Activated CD8-positive, alpha-beta T cell treated with anti-CD3 and anti-CD28 coated beads, Interleukin-2, amount 10 ng/mL, durations not matched to agents 7 days and 5 days (primary cell): ENCODE measurements at regions of chr20 and their contacts with region 1.

Region 1: GRCh38 chr20:36645998-36646397 is at the start of gene SLA2:
- DNase-seq: peak; percentile 86
- ATAC-seq: peak; percentile 80
- H3K4me3 Mint-ChIP-seq: peak within 1 kb of the TSS; percentile 99
- H3K27ac Mint-ChIP-seq: peak within 1 kb of the TSS; percentile 93
- H3K4me1 Mint-ChIP-seq: peaks cover 49% of the 10 kb centered on the region
- H3K27me3 Mint-ChIP-seq: no peaks in the 10 kb centered on the region
- total RNA-seq, gene SLA2: 131 to 137 TPM

Region 2: GRCh38 chr20:36605399-36606157 is 40.4 kb before region 1 on chr20 and contains the start of gene RAB5IF:
- CTCF ChIA-PET with region 1: interaction called, 10 read pairs
- POLR2A ChIA-PET with region 1: interaction called, 31 read pairs
- DNase-seq: peak; percentile 100
- ATAC-seq: peak; percentile 95
- H3K4me3 Mint-ChIP-seq: peak within 1 kb of the TSS; percentile 98
- H3K27ac Mint-ChIP-seq: peak within 1 kb of the TSS; percentile 98
- H3K4me1 Mint-ChIP-seq: peaks cover 28% of the 10 kb centered on the region
- H3K27me3 Mint-ChIP-seq: no peaks in the 10 kb centered on the region
- total RNA-seq, gene RAB5IF: 108 to 109 TPM

Region 3: GRCh38 chr20:36629719-36630681 is 16.0 kb before region 1 on chr20:
- CTCF ChIA-PET with region 1: interaction called, 9 read pairs
- POLR2A ChIA-PET with region 1: interaction called, 34 read pairs
- DNase-seq: peak; percentile 78
- ATAC-seq: peak; percentile 95
- H3K4me3 Mint-ChIP-seq: peak overlapping the region; percentile 60
- H3K27ac Mint-ChIP-seq: peak overlapping the region; percentile 96
- H3K4me1 Mint-ChIP-seq: peaks cover 64% of the 10 kb centered on the region
- H3K27me3 Mint-ChIP-seq: no peaks in the 10 kb centered on the region

Region 4: GRCh38 chr20:36682311-36682710 is 36.3 kb after region 1 on chr20:
- CTCF ChIA-PET with region 1: no interaction called
- POLR2A ChIA-PET with region 1: no interaction called
- DNase-seq: no peak
- ATAC-seq: no peak
- H3K4me3 Mint-ChIP-seq: no peak overlapping the region
- H3K27ac Mint-ChIP-seq: no peak overlapping the region
- H3K4me1 Mint-ChIP-seq: peaks cover 9% of the 10 kb centered on the region
- H3K27me3 Mint-ChIP-seq: no peaks in the 10 kb centered on the region

Region 5: DNA sequence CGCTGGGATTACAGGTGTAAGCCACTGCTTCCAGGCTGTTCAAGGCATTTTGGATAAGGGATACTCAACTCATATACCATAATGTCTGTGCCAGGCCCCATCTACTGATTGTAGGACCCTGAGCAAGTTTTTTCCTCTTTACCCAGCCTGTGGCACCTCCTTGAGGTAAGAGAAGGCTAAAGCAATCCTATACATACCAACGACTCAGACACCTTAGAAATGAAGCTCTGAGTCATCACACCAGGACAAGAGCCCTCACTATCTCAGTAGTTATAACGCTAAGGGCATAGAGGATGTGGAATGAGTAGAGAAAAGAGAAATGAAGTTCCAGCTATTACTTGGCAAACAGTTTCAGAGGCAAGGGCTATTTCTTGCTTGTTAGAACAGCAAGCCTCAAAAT is 83.0 kb after region 1 on chr20:
- CTCF ChIA-PET with region 1: interaction called, 14 read pairs
- POLR2A ChIA-PET with region 1: interaction called, 7 read pairs
- DNase-seq: peak; percentile 36
- ATAC-seq: peak; percentile 63
- H3K4me3 Mint-ChIP-seq: no peak overlapping the region
- H3K27ac Mint-ChIP-seq: no peak overlapping the region
- H3K4me1 Mint-ChIP-seq: peaks cover 32% of the 10 kb centered on the region
- H3K27me3 Mint-ChIP-seq: no peaks in the 10 kb centered on the region